ENCODE measurements at regions of chr20 and their contacts with region 1.

Region 1: GRCh38 chr20:17682103-17682888 is at the start of gene RRBP1:
- DNase-seq: peak; percentile 98
- ATAC-seq: peak; percentile 97
- H3K4me3 Mint-ChIP-seq: peak within 1 kb of the TSS; percentile 76
- H3K27ac Mint-ChIP-seq: peak within 1 kb of the TSS; percentile 74
- H3K4me1 Mint-ChIP-seq: peaks cover 16% of the 10 kb centered on the region
- H3K27me3 Mint-ChIP-seq: peaks cover 20% of the 10 kb centered on the region
- total RNA-seq, gene RRBP1: 21.1 to 24.9 TPM

Region 2: DNA sequence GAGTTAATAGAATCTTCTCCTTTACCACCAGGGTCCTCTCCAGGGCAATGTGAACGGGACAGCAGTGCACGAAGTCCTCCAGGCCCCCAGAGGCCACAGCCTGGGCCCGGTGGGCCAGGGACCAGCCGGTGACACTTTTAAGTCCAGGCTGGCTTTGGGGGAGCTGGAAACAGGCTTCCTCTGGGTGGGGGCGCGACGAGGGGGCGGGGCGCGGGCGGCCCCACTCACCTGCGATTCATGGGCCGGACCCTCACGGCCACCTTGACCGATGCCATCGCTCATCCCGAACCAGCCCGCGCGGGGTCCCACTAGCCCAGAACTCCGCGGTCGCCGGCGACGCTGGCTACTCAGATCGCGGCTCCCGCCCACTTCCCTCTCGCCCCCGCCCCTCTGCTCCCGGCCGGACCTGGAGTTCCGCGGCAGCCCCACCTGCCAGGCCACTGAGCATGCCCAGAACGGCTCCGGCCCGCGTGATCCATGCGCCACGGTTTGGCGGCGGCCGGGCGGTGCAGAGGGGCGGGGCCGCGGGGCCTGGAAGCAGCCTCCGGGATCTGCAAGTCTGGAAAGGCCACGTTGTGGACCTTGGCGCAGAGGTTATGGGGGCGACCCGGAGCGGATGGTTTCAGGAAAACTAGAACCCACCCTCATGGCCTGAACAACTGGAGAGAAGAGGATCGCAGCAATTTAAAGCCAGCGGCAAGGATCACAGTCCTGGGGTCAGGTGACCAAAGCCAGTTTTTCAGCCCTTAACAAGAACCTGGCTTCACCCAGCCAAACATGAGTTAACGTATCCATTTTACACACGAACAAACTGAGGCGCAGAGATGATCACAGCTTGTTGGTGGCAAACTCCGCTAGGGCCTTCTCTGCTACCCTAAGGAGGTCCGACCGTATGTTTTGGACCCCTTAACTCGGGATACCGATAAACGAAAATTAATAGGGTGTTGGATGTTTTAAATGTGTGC is 1109.0 kb before region 1 on chr20 and contains the start of gene KIF16B:
- CTCF ChIA-PET with region 1: no interaction called
- POLR2A ChIA-PET with region 1: no interaction called
- intact Hi-C with region 1: loop called in 1 of 2 experiments (anchors 5 kb)
- DNase-seq: peak; percentile 92
- ATAC-seq: peak; percentile 87
- H3K4me3 Mint-ChIP-seq: peak within 1 kb of the TSS; percentile 85
- H3K27ac Mint-ChIP-seq: peak within 1 kb of the TSS; percentile 79
- H3K4me1 Mint-ChIP-seq: peaks cover 42% of the 10 kb centered on the region
- H3K27me3 Mint-ChIP-seq: no peaks in the 10 kb centered on the region
- total RNA-seq, gene KIF16B: 7.5 to 8.7 TPM

Region 3: GRCh38 chr20:17530716-17531664 is 151.3 kb before region 1 on chr20 and contains the start of gene BFSP1:
- CTCF ChIA-PET with region 1: no interaction called
- POLR2A ChIA-PET with region 1: no interaction called
- intact Hi-C with region 1: loop called (anchors 1 to 2 kb)
- DNase-seq: peak; percentile 78
- ATAC-seq: peak; percentile 81
- H3K4me3 Mint-ChIP-seq: peak within 1 kb of the TSS; percentile 70
- H3K27ac Mint-ChIP-seq: peak within 1 kb of the TSS; percentile 68
- H3K4me1 Mint-ChIP-seq: peaks cover 16% of the 10 kb centered on the region
- H3K27me3 Mint-ChIP-seq: peaks cover 8% of the 10 kb centered on the region
- total RNA-seq, gene BFSP1: 0.12 to 0.23 TPM

Region 4: DNA sequence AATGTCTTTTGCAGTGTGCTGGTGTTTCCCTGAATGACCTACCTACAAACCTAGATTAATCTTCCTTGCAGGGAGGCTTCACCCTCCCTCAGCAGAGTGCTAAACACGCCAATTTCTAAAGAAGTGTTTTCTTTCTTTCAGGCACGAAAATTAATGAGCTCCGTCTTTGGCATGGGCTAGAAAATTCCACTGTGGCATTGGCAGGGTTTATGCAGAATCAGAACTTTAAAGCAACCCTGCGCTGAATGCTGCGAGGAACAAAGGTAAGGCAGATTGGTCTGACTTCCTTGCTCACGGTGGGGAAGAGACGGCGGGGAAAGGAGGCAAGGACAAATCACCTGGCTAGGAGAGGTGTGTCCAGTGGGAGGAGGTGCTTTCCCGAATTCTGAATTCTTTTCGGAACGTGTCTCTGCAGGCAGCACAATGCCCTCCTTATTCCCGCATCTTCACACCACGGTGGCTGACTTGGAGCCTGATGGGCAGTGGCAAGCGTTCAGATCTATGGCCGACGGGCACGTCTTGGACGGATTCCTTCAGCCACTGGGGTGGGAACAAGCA is 11.2 kb after region 1 on chr20:
- CTCF ChIA-PET with region 1: interaction called, 20 read pairs
- POLR2A ChIA-PET with region 1: no interaction called
- intact Hi-C with region 1: no loop called
- DNase-seq: no peak
- ATAC-seq: no peak
- H3K4me3 Mint-ChIP-seq: no peak overlapping the region
- H3K27ac Mint-ChIP-seq: no peak overlapping the region
- H3K4me1 Mint-ChIP-seq: no peaks in the 10 kb centered on the region
- H3K27me3 Mint-ChIP-seq: peaks cover 17% of the 10 kb centered on the region

Region 5: DNA sequence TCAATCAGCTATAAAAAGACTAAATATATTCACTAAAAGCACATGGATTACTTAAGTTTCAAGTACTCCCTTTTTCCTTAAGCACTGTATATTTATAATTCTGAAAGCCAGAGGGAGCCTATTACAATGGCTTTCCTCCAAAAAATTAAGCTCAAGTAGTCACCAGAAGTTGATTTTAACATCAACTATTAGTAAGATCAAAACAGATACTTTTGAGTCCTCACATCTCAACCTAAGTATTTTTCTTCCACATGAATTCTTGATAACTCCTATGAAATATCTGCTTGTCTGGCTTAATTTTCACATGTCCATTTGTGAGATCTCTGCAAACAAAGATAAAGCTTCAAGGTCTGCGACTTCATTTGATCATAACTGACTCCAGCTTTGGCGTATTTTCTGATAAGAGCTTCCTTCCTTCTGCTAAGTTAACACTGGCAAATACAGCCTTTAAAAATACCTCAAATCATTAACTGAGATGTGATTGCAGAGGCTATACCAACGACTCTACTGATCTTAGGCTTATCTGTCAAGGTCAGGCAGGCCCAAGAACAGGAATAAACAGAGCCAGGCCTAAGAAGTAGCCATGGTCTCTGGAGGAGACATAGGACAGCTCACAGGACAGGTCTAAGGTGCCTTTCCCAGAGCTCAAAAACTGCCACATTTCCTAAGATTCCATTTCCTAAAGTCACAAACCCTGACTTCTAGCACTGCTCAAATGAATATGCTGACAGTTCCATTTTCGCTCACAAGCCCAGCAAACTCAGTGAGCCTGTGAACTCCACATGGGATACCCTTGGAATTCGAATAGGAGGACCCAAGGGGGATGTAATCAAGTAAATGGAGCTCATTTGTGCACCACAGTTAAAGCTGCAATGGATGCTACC is 276.3 kb after region 1 on chr20:
- CTCF ChIA-PET with region 1: interaction called, 12 read pairs
- POLR2A ChIA-PET with region 1: no interaction called
- intact Hi-C with region 1: no loop called
- DNase-seq: no peak
- ATAC-seq: no peak
- H3K4me3 Mint-ChIP-seq: no peak overlapping the region
- H3K27ac Mint-ChIP-seq: peak overlapping the region; percentile 78
- H3K4me1 Mint-ChIP-seq: peaks cover 78% of the 10 kb centered on the region
- H3K27me3 Mint-ChIP-seq: no peaks in the 10 kb centered on the region

Region 6: DNA sequence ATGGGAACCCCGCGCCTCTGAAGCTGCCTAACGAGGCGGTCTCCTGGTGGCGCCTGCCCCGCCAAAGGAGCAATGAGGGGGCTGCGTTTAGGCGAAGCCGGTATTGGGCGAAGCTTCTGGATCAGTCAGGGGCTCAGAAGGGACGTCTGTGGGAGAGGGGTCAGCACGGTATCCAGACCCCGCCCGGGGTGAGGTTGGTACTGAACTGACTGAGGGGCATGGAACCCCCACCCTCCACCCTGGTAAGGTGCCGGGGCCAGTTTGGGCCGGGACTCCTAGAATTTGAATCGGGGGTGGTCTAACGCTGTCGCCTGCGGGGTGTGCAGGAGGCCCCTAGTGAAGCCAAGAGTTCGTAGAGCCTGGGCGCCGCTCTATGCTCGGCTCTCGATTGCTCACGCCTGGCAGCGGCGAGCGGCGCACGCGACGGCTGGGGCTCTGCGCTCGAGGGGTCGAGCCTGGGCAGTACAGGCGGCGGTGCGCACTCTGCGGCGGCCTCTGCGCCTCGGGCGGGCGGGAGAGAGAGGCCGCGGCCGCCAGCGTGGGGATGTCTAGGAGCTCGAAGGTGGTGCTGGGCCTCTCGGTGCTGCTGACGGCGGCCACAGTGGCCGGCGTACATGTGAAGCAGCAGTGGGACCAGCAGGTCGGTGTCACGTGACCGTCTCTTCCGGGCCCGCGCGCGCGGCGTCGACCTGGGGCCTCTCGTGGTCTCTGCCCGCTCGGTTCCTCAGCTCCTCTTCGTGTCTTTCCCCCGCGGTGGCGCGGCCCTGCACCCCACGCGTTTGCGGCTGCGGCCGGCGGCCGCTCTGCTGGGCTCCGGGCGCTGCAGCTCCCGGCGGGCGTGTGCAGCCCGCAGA is 455.3 kb after region 1 on chr20 and contains the starts of genes KAT14 and PET117:
- CTCF ChIA-PET with region 1: no interaction called
- POLR2A ChIA-PET with region 1: no interaction called
- intact Hi-C with region 1: loop called (anchors 1 to 5 kb)
- DNase-seq: peak; percentile 94
- ATAC-seq: peak; percentile 91
- H3K4me3 Mint-ChIP-seq: peak within 1 kb of the TSS; percentile 74
- H3K27ac Mint-ChIP-seq: peak within 1 kb of the TSS; percentile 89
- H3K4me1 Mint-ChIP-seq: peaks cover 32% of the 10 kb centered on the region
- H3K27me3 Mint-ChIP-seq: peaks cover 1% of the 10 kb centered on the region
- total RNA-seq, gene KAT14: 17.2 to 17.9 TPM
- total RNA-seq, gene PET117: 12.0 to 18.7 TPM

Region 7: GRCh38 chr20:18507218-18508021 is 825.1 kb after region 1 on chr20 and contains the start of gene SEC23B:
- CTCF ChIA-PET with region 1: no interaction called
- POLR2A ChIA-PET with region 1: interaction called, 6 read pairs
- intact Hi-C with region 1: loop called (anchors 1 to 5 kb)
- DNase-seq: peak; percentile 99
- ATAC-seq: peak; percentile 94
- H3K4me3 Mint-ChIP-seq: peak within 1 kb of the TSS; percentile 99
- H3K27ac Mint-ChIP-seq: peak within 1 kb of the TSS; percentile 100
- H3K4me1 Mint-ChIP-seq: peaks cover 48% of the 10 kb centered on the region
- H3K27me3 Mint-ChIP-seq: no peaks in the 10 kb centered on the region
- total RNA-seq, gene SEC23B: 95.3 to 119 TPM